ENCODE measurements at regions of chr15 and their contacts with region 1.

Region 1: GRCh38 chr15:57732526-57733331 is 26.2 kb downstream of the POLR2M start:
- DNase-seq: peak; percentile 79
- H3K4me3 ChIP-seq: peak overlapping the region in 1 of 3 experiments; percentile 15
- H3K27ac ChIP-seq: no peak overlapping the region
- H3K4me1 ChIP-seq: peaks cover 10% of the 10 kb centered on the region
- H3K27me3 ChIP-seq: no peaks in the 10 kb centered on the region
- CTCF ChIP-seq: peak; percentile 78 to 89
- POLR2A ChIP-seq: no peak

Region 2: GRCh38 chr15:57667171-57667849 is 65.4 kb before region 1 on chr15:
- CTCF ChIA-PET with region 1: interaction called, 13 read pairs
- POLR2A ChIA-PET with region 1: no interaction called
- dilution Hi-C with region 1: no loop called
- intact Hi-C with region 1: loop called (anchors 2 kb)
- DNase-seq: peak; percentile 67
- H3K4me3 ChIP-seq: no peak overlapping the region
- H3K27ac ChIP-seq: no peak overlapping the region
- H3K4me1 ChIP-seq: peaks cover 7% of the 10 kb centered on the region
- H3K27me3 ChIP-seq: no peaks in the 10 kb centered on the region
- CTCF ChIP-seq: peak in 1 of 2 donors; percentile 42
- POLR2A ChIP-seq: no peak

Region 3: GRCh38 chr15:57680021-57680420 is 52.7 kb before region 1 on chr15:
- CTCF ChIA-PET with region 1: interaction called, 10 read pairs
- POLR2A ChIA-PET with region 1: no interaction called
- dilution Hi-C with region 1: no loop called
- intact Hi-C with region 1: no loop called
- DNase-seq: peak; percentile 35
- H3K4me3 ChIP-seq: no peak overlapping the region
- H3K27ac ChIP-seq: no peak overlapping the region
- H3K4me1 ChIP-seq: no peaks in the 10 kb centered on the region
- H3K27me3 ChIP-seq: no peaks in the 10 kb centered on the region
- CTCF ChIP-seq: no peak
- POLR2A ChIP-seq: no peak

Region 4: DNA sequence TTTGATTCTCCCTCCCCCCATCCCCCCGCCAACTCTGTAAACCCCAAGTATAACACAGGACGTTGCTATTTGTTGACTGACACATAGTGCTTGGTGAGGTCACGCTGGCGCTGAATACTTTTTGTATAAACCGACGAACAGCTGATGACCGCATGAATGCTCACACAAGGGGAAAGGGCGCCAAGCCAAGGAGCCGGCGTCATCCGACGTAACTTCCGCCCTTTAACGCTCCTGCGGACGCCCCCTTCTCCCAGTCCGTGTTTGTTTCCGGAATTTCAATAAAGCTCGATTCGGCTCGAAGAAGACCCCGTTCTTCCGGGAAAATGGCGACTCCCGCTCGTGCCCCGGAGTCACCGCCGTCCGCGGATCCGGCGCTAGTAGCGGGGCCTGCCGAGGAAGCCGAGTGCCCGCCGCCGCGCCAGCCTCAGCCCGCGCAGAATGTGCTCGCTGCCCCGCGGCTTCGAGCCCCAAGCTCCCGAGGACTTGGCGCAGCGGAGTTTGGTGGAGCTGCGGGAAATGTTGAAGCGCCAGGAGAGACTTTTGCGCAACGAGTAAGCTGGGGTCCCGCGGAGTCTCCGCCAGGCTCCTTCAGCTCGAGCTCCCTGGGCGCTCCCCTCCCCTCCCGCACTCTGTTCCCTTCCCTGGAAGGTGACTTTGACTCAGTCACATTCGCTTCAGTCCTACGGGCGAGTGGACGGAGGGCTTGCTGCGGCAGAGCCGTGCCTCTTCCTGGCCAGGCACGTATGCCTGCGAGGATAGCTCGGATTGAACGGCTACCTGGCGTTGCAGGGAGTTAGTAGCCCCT is 26.1 kb before region 1 on chr15 and contains the start of gene POLR2M:
- CTCF ChIA-PET with region 1: interaction called, 16 read pairs
- POLR2A ChIA-PET with region 1: no interaction called
- dilution Hi-C with region 1: no loop called
- intact Hi-C with region 1: no loop called
- DNase-seq: peak; percentile 99
- H3K4me3 ChIP-seq: peak within 1 kb of the TSS; percentile 18 to 71 (median 59)
- H3K27ac ChIP-seq: peak within 1 kb of the TSS; percentile 74
- H3K4me1 ChIP-seq: peaks cover 16% of the 10 kb centered on the region
- H3K27me3 ChIP-seq: no peaks in the 10 kb centered on the region
- CTCF ChIP-seq: no peak
- POLR2A ChIP-seq: peak; percentile 63
- total RNA-seq, gene POLR2M: 42.5 and 50.6 TPM in 2 replicates

Region 5: GRCh38 chr15:57720867-57721266 is 11.9 kb before region 1 on chr15:
- CTCF ChIA-PET with region 1: interaction called, 41 read pairs
- POLR2A ChIA-PET with region 1: no interaction called
- dilution Hi-C with region 1: no loop called
- intact Hi-C with region 1: no loop called
- DNase-seq: no peak
- H3K4me3 ChIP-seq: no peak overlapping the region
- H3K27ac ChIP-seq: no peak overlapping the region
- H3K4me1 ChIP-seq: no peaks in the 10 kb centered on the region
- H3K27me3 ChIP-seq: no peaks in the 10 kb centered on the region
- CTCF ChIP-seq: no peak
- POLR2A ChIP-seq: no peak

Region 6: DNA sequence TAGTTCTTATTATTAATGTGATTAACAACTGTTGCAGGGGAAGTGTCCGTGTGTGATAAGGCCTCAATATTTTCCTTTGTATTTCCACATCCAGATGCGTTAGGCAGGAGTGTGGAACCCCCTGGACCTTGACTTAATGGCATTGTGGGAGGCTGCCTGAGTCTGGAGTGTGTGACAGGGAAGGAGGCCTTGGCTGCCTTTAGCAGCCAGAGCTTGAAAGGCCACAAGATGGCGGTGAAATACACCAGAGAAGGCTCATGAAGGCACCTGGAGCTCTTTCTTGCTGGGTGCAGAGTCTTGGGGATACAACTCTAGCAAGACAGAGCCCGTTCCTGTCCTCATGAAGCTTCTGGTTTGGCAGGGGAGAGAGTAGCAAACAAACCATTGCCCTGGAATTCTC is 10.7 kb after region 1 on chr15:
- CTCF ChIA-PET with region 1: interaction called, 77 read pairs
- POLR2A ChIA-PET with region 1: no interaction called
- dilution Hi-C with region 1: no loop called
- intact Hi-C with region 1: no loop called
- DNase-seq: peak; percentile 12
- H3K4me3 ChIP-seq: no peak overlapping the region
- H3K27ac ChIP-seq: no peak overlapping the region
- H3K4me1 ChIP-seq: no peaks in the 10 kb centered on the region
- H3K27me3 ChIP-seq: no peaks in the 10 kb centered on the region
- CTCF ChIP-seq: peak in 1 of 2 donors; percentile 29
- POLR2A ChIP-seq: no peak

Region 7: GRCh38 chr15:57816599-57816998 is 83.9 kb after region 1 on chr15:
- CTCF ChIA-PET with region 1: no interaction called
- POLR2A ChIA-PET with region 1: no interaction called
- dilution Hi-C with region 1: no loop called
- intact Hi-C with region 1: no loop called
- DNase-seq: no peak
- H3K4me3 ChIP-seq: no peak overlapping the region
- H3K27ac ChIP-seq: no peak overlapping the region
- H3K4me1 ChIP-seq: peaks cover 11% of the 10 kb centered on the region
- H3K27me3 ChIP-seq: peaks cover 0 to 2% of the 10 kb centered on the region in 2 experiments
- CTCF ChIP-seq: no peak
- POLR2A ChIP-seq: no peak

Measured in endothelial cell of umbilical vein (primary cell).